ENCODE measurements at regions of chr1 and their contacts with region 1.

Region 1: DNA sequence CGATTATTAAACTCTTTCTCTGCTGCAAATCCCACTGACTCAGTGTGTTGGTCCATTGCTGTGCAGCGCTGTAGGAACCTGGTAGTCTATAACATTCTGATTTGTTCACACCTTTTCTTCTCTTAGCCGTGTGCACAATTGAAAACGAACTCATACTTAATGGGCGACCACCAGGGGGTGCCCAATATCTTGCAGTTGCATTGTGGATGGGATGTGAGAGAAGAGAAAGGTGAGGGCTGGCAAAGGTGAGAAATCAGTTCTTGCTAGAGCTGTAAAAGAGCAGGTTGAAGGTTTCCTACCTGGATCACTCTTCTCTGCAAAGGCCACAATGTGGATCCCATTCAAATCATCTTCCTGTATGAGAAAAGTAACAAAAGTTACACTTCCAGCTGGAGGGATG is 51.0 kb downstream of the CASQ2 start:
- DNase-seq: peak; percentile 70
- H3K4me3 Mint-ChIP-seq: no peak overlapping the region
- H3K27ac Mint-ChIP-seq: peak overlapping the region; percentile 69
- H3K4me1 Mint-ChIP-seq: peaks cover 35% of the 10 kb centered on the region
- H3K27me3 Mint-ChIP-seq: no peaks in the 10 kb centered on the region
- CTCF ChIP-seq: peak; percentile 18

Region 2: DNA sequence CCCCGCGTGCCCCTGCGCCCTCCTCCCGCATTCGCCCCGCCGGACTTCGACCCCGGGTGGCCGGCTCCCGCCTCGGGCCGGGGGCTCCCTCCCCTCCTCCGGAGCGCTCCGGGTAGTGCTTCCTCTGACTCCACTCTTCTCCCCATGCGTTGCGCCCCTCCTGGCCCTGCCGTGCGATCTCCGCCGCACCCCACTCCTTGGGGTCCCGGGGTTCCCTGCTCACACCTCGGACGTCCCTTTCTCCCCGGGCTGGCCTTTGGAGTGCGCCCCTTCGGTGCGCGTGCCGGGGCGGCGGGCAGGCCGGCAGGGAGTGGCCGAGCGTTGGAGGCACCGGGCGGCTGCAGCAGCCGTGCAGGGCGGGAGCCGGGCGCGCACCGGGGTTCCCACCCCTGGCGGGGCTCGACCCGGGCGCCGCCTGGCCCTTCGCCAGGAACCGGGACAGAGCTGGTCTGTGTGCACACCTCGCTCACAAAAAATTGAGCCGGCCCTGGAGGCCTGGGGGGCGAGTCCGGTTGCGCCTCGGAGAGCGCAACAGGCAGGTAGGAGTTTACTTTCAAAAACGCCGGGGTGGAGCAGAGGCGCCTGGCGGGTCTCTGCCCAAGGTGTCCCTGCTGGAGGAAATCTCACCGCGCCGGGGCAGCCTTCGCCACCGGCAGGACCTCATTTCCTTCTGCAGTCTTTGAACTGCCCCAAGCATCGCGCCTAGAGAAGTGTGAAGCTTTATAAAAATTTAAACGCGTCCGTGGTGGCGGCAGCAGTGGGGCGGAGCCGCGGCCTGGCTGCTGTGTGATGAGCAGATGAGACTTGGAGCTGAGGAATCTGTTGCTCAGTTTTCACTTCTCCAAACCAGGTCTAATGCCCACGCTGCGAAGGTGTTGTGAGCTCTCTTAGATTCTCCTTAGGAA is 75.1 kb before region 1 on chr1:
- CTCF ChIA-PET with region 1: no interaction called
- intact Hi-C with region 1: no loop called
- DNase-seq: peak; percentile 57
- H3K4me3 Mint-ChIP-seq: peak overlapping the region; percentile 68
- H3K27ac Mint-ChIP-seq: no peak overlapping the region
- H3K4me1 Mint-ChIP-seq: no peaks in the 10 kb centered on the region
- H3K27me3 Mint-ChIP-seq: peaks cover 17% of the 10 kb centered on the region
- CTCF ChIP-seq: no peak

Region 3: DNA sequence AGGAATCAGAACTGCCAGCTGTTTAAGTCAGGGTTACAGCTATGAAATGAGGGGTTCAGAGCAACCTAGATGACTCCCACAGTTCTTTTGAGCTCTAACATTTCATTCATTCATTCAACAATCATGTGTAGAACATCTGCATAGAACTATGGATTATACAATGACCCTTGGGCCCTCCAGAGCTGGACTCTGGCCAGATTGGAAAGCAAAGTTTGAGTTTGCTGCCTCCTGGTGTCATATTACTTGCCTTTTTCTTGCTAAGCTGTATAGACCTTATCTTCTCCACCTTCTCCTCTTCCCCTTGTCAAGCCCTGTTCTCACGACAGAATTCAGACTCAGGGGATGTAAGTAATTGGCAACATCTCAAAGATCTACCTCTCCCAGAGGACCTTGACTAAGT is 47.0 kb after region 1 on chr1:
- CTCF ChIA-PET with region 1: interaction called, 27 read pairs
- intact Hi-C with region 1: loop called (anchors 1 kb)
- DNase-seq: peak; percentile 64
- H3K4me3 Mint-ChIP-seq: no peak overlapping the region
- H3K27ac Mint-ChIP-seq: no peak overlapping the region
- H3K4me1 Mint-ChIP-seq: peaks cover 33% of the 10 kb centered on the region
- H3K27me3 Mint-ChIP-seq: no peaks in the 10 kb centered on the region
- CTCF ChIP-seq: no peak

Region 4: DNA sequence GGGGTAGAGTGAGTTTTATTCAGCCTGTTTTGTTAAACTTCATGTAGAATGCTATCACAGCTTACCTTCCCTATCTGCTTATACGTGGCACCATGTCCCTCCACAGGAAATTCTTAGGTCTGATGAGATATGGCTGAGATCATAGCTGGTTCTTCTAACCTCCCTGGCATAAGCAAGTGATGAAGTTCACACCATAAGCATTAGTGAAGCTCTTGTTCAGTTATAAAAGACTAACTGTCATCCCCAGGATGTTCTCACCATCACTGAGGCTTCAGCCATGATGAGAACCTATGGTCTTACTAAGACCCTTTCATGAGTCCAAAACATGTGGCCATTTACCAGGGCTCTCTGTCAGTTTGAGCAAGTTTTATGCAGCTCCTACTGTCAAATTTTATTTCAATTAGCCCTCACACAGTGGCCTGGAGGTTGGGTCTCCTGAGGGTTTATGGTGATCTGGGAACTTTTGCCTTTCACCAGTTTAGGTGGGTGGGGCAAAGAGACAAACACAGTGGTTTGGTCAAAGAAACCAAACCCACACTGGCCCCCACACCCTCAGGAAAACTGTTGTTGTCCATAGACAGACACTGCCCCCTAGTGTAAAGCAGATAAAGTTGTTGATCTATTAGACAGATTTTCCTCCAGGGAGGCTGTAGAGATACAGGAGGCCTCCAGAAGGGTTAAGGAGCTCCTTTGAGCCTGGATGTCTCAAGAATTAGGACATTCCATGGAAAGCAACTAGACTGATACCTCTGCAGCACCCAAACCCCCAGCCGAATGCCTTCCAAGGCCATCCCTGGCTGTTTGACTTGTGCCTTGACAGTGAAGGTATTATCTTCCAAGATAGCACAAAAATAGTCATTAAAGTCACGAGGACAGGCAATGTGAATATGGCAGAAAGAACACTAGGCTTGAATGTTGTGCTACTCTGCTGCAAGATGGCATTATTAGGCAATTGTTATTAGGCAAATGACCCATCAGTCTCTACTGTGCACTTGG is 263.8 kb after region 1 on chr1:
- CTCF ChIA-PET with region 1: no interaction called
- intact Hi-C with region 1: loop called (anchors 5 kb)
- DNase-seq: peak; percentile 30
- H3K4me3 Mint-ChIP-seq: no peak overlapping the region
- H3K27ac Mint-ChIP-seq: no peak overlapping the region
- H3K4me1 Mint-ChIP-seq: peaks cover 17% of the 10 kb centered on the region
- H3K27me3 Mint-ChIP-seq: no peaks in the 10 kb centered on the region
- CTCF ChIP-seq: peak; percentile 76